Dorsolateral prefrontal cortex (tissue), 120 donors: ENCODE measurements at regions of chr12 and their contacts with region 1.

Region 1: DNA sequence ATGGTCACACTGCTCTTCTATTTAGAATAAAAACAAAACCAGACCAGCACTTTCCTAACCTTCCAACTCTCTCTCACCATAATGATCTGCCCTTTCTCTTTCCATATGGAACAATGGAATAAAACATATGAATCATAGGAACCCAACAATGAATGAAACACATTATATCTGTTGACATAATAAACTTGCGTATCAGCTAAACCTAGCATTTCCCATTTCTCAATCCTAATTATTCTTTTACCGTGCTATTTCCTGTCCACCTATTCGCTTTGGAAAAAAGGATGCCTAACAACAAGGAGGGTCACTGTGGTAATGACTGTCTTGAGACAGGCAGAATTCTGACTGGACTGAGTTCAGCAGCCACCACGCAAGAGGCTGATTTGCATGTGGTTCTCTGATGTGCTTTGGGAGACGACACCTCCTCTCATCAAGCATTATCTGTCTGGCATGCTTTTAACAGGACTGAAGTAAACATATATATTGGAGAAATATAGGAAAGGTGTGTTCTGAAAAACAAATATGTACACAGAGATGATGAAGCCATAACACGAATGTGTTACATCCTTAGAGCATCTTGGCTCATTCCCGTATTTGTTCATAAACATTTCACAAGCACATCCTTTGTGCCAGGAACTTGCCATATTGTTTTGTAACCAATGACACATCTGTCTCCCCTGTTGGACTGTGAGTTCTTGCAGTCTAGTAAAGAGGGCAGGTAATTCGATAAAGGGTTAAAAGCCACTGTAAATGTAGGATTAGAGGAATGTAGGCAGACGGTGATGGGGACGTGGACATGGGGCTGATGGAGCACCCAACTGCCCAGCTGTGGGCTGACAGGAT is 87.7 kb downstream of the PTPRB start:
- DNase-seq: no peak
- H3K4me3 ChIP-seq: no peak overlapping the region
- H3K27ac ChIP-seq: peak overlapping the region in 45 of 59 donors; percentile 0 to 76 (median 48)
- H3K27me3 ChIP-seq: no peaks in the 10 kb centered on the region
- CTCF ChIP-seq: no peak

Region 2: GRCh38 chr12:70402600-70402999 is 147.0 kb before region 1 on chr12:
- intact Hi-C with region 1: loop called in 1 of 2 experiments (anchors 10 kb)
- DNase-seq: no peak
- H3K4me3 ChIP-seq: no peak overlapping the region
- H3K27ac ChIP-seq: peak overlapping the region in 11 of 59 donors; percentile 1 to 58 (median 25)
- H3K27me3 ChIP-seq: no peaks in the 10 kb centered on the region
- CTCF ChIP-seq: peak in 4 of 56 donors; percentile 15 to 38 (median 22)

Region 3: DNA sequence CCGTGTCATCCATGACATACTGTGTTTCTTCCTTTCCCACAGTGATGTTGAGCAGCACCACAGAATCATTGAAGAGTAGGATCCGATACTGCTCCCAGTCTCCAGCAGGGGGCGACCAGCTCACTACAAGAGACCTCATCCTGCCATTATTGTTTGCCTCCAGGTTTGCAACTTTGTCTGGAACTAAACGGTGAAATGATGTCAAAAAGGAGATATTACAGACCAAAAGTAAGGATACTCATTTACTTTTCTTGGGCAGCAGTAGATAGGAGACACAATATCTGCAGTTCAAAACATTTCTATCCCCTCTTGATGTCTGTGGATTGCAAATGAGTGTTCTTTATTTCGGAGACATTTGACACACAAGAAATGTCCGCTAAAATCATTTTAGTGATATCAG is 40.5 kb after region 1 on chr12:
- intact Hi-C with region 1: no loop called
- DNase-seq: peak; percentile 51 to 90 (median 74)
- H3K4me3 ChIP-seq: no peak overlapping the region
- H3K27ac ChIP-seq: no peak overlapping the region
- H3K27me3 ChIP-seq: no peaks in the 10 kb centered on the region
- CTCF ChIP-seq: peak; percentile 63 to 97 (median 89)